ENCODE measurements at regions of chr18 and their contacts with region 1.

Region 1: GRCh38 chr18:11040823-11041656 is 108.3 kb downstream of the PIEZO2 start:
- DNase-seq: peak; percentile 52 to 68 (median 60)
- H3K4me3 ChIP-seq: no peak overlapping the region
- H3K27ac ChIP-seq: no peak overlapping the region
- H3K4me1 ChIP-seq: peaks cover 0 to 10% (median 3%) of the 10 kb centered on the region in 4 experiments
- H3K27me3 ChIP-seq: no peaks in the 10 kb centered on the region

Region 2: GRCh38 chr18:10726198-10726965 is 314.7 kb before region 1 on chr18:
- CTCF ChIA-PET with region 1: no interaction called
- POLR2A ChIA-PET with region 1: no interaction called
- DNase-seq: peak; percentile 14 to 61 (median 41)
- H3K4me3 ChIP-seq: peak overlapping the region in 5 of 7 experiments; percentile 32 to 77 (median 53)
- H3K27ac ChIP-seq: no peak overlapping the region
- H3K4me1 ChIP-seq: peaks cover 0 to 12% (median 3%) of the 10 kb centered on the region in 4 experiments
- H3K27me3 ChIP-seq: peaks cover 0 to 22% (median 3%) of the 10 kb centered on the region in 5 experiments

Region 3: DNA sequence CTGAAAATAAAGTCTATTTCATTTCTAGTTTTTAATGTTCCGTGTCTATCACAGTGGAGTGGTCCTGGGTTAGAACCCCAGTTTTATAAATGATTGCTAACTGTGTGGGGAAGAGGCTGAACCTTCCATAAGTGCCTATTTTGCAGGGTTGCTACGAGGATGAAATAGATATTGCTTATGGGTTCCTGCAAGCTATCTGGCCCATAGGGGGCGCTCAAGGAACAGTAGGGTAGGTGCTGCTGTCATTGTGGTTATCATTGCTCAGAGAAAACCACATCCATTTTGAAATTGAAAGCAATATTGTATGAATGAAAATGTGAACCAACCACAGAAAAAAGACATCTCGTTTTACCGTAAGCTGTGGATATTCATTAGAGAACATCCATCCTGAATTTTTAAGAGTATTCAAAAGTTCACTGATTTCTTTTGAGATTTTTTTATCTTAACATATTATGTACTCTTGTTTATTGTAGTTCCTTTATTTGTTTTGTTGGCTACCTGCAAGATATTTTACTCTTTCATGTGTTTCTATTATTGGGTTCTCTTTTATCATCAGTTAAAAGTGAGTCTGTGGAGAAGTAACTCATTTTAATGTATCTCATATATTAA is 253.6 kb before region 1 on chr18:
- CTCF ChIA-PET with region 1: interaction called, 31 read pairs
- POLR2A ChIA-PET with region 1: no interaction called
- DNase-seq: peak; percentile 94 to 97 (median 96)
- H3K4me3 ChIP-seq: peak overlapping the region in 1 of 7 experiments; percentile 30
- H3K27ac ChIP-seq: no peak overlapping the region
- H3K4me1 ChIP-seq: peaks cover 0 to 7% (median 3%) of the 10 kb centered on the region in 4 experiments
- H3K27me3 ChIP-seq: no peaks in the 10 kb centered on the region

Region 4: GRCh38 chr18:10851824-10852319 is 189.2 kb before region 1 on chr18:
- CTCF ChIA-PET with region 1: interaction called, 71 read pairs
- POLR2A ChIA-PET with region 1: no interaction called
- DNase-seq: peak; percentile 60 to 82 (median 75)
- H3K4me3 ChIP-seq: no peak overlapping the region
- H3K27ac ChIP-seq: no peak overlapping the region
- H3K4me1 ChIP-seq: peaks cover 0 to 21% (median 7%) of the 10 kb centered on the region in 4 experiments
- H3K27me3 ChIP-seq: no peaks in the 10 kb centered on the region

Region 5: DNA sequence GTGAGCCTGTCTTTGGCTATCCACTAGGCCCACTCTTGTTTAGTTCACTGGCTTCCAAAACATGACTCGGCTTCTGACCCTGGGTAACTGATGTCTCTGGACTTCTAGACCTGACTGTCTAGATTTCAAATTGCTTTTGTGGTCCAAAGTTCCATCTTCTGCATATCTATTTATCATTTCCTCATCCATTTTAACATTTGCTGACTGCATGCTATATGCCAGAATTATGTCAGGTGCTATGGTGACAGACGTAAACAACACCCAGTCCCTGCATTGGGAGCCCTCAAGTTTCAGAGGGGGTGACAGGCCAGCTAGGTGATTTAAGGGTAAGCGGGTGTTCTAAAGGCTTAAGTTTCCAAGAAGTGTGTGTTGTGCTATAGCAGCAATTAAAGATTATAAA is 32.5 kb before region 1 on chr18:
- CTCF ChIA-PET with region 1: interaction called, 10 read pairs
- POLR2A ChIA-PET with region 1: no interaction called
- DNase-seq: no peak
- H3K4me3 ChIP-seq: no peak overlapping the region
- H3K27ac ChIP-seq: no peak overlapping the region
- H3K4me1 ChIP-seq: no peaks in the 10 kb centered on the region
- H3K27me3 ChIP-seq: no peaks in the 10 kb centered on the region

Region 6: GRCh38 chr18:11020877-11021414 is 20.1 kb before region 1 on chr18:
- CTCF ChIA-PET with region 1: no interaction called
- POLR2A ChIA-PET with region 1: no interaction called
- DNase-seq: no peak
- H3K4me3 ChIP-seq: no peak overlapping the region
- H3K27ac ChIP-seq: no peak overlapping the region
- H3K4me1 ChIP-seq: peaks cover 0 to 3% (median 1%) of the 10 kb centered on the region in 4 experiments
- H3K27me3 ChIP-seq: no peaks in the 10 kb centered on the region

Region 7: GRCh38 chr18:11283479-11284161 is 242.6 kb after region 1 on chr18:
- CTCF ChIA-PET with region 1: no interaction called
- POLR2A ChIA-PET with region 1: no interaction called
- DNase-seq: no peak
- H3K4me3 ChIP-seq: no peak overlapping the region
- H3K27ac ChIP-seq: no peak overlapping the region
- H3K4me1 ChIP-seq: no peaks in the 10 kb centered on the region
- H3K27me3 ChIP-seq: no peaks in the 10 kb centered on the region

Region 8: DNA sequence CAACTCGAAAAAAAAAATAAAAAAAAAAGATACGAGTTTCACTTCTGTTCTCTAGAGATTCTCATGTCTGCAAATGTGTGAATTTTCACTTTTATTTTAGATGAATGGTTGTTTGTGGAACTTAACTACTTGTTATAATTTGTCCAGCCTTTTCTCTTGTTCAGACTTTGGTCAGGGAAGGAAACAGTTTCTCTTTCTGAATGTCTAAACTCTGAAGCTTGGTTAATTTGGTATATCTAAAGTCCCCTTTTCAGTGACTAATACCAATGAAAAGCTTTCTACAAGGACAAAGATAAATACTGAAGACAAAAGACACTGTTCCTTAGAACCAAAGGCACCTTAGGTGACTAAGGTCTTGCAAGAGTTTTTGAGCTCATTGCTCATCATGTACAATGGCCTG is 252.8 kb after region 1 on chr18:
- CTCF ChIA-PET with region 1: no interaction called
- POLR2A ChIA-PET with region 1: no interaction called
- DNase-seq: no peak
- H3K4me3 ChIP-seq: no peak overlapping the region
- H3K27ac ChIP-seq: no peak overlapping the region
- H3K4me1 ChIP-seq: no peaks in the 10 kb centered on the region
- H3K27me3 ChIP-seq: no peaks in the 10 kb centered on the region

Measured in common myeloid progenitor, CD34-positive (primary cell).